ENCODE measurements at regions of chr11 and their contacts with region 1.

Region 1: DNA sequence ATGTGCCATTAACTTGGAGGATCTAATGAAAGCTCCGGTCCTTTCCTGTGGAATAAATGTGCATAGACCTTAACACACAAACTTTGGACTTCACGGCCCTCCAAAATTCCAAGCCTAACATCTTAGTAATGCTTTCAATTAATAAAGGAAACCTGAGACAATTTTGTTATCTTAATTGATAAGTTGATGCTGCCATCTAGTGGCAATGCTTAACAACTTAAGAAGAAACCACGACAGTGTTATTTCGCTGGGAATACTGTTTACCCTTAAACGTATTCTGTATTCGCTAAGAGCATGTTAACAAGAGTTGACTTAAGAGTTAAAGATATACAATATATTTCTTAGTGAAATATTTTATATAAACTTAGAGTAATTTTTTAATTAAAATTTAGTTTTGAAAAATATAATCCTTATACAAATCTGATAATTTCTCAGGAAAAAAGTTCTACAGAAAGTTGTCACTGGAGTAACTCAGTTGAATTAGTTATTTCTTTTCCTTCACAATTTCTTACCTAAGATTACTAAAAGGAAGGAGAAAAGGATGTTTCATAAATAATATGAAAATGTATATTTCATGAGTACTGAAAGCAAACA is 35.0 kb upstream of the OR9G4 start:
- DNase-seq: peak in 1 of 4 donors; percentile 17
- ATAC-seq: peak; percentile 48
- H3K4me3 ChIP-seq: no peak overlapping the region
- H3K27ac ChIP-seq: no peak overlapping the region
- H3K4me1 ChIP-seq: no peaks in the 10 kb centered on the region
- H3K27me3 ChIP-seq: no peaks in the 10 kb centered on the region
- CTCF ChIP-seq: peak; percentile 11 to 67 (median 60)
- POLR2A ChIP-seq: no peak

Region 2: DNA sequence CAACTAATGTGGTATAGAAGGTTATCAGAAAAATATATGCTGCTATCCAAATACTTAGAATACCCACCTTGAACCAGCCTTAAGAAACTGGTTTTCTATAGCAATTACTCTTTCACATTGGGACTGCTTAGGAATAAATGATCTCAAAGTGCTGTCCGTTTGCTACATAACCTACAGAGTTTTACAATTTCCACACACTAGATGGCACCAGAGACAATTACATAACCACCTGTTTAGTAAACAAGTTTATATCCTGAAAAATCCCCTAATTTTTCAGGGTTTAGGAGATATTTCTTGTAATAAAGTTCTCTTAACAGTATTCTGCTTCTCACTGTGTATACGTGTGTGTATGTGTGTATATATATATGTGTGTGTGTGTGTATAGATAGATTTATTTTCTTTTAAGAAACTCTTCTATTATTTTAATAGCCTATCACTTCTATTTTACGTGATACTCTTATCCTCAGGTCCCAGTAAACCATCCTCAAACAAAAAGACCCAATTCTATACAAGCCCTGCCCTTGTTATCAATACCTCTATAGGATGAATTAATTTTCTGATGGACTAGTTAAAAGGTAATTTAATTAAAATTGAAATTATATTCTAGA is 840.7 kb before region 1 on chr11:
- intact Hi-C with region 1: loop called (anchors 5 kb)
- DNase-seq: peak in 1 of 4 donors; percentile 14
- ATAC-seq: peak; percentile 59
- H3K4me3 ChIP-seq: no peak overlapping the region
- H3K27ac ChIP-seq: no peak overlapping the region
- H3K4me1 ChIP-seq: no peaks in the 10 kb centered on the region
- H3K27me3 ChIP-seq: no peaks in the 10 kb centered on the region
- CTCF ChIP-seq: peak; percentile 11 to 67 (median 59)
- POLR2A ChIP-seq: no peak

Region 3: GRCh38 chr11:57116654-57117053 is 333.1 kb after region 1 on chr11:
- intact Hi-C with region 1: no loop called
- DNase-seq: peak; percentile 31 to 47 (median 38)
- ATAC-seq: no peak
- H3K4me3 ChIP-seq: no peak overlapping the region
- H3K27ac ChIP-seq: no peak overlapping the region
- H3K4me1 ChIP-seq: no peaks in the 10 kb centered on the region
- H3K27me3 ChIP-seq: no peaks in the 10 kb centered on the region
- CTCF ChIP-seq: peak; percentile 15 to 58 (median 52)
- POLR2A ChIP-seq: no peak

Region 4: DNA sequence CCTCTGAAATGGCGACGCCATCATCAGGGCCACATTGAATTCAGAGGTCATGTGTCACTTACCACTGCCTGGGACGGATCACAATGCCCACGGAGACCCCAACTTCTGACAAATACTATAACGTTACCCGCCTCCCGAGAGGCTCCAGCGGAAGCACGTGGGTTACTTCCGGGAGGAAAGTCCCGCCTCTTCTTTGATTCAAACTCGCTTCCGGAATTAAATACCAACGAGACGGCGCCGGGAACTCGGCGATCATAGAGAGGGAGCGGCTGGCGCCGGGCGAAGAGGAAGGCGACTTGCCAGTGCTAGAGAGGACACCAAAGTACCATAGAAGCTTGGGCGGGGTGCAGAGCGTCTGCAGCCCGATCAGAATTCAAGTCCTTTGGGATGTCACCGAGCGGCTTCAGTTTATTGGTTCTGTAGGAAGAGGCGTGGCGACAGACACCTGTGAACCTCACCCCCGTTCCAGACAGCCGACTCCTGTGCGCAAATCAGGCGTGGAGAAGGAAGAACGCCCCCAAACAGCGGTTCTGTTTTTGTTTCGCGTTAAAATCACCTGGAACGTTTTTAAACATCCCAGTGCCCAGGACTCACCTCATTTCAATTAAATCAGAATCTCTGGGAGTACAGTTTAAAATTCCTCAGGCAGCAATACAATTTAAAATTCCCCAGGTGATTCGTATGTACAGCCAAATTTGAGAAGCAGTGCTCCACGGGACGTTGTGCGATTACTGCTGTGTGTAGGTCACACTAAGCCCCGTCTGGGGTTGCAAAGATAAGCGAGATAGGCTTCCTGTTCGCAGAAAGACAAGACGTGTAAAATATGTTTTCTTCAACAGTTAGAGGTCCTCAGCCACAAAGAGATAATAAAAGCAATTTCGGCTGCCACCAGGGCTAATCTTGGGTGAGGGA is 747.3 kb after region 1 on chr11 and contains the start of gene TIMM10:
- intact Hi-C with region 1: no loop called
- DNase-seq: peak; percentile 97 to 99 (median 98)
- ATAC-seq: peak; percentile 97
- H3K4me3 ChIP-seq: peak within 1 kb of the TSS; percentile 59 to 69
- H3K27ac ChIP-seq: peak within 1 kb of the TSS; percentile 74 to 95 (median 87)
- H3K4me1 ChIP-seq: peaks cover 26% of the 10 kb centered on the region
- H3K27me3 ChIP-seq: no peaks in the 10 kb centered on the region
- CTCF ChIP-seq: no peak
- POLR2A ChIP-seq: peak; percentile 29 to 82 (median 78)
- total RNA-seq, gene TIMM10: 5.6 to 24.4 TPM